Esophagus muscularis mucosa (tissue), 4 donors: ENCODE measurements at regions of chr12 and their contacts with region 1.

Region 1: GRCh38 chr12:76878899-76879709 is at the start of gene CSRP2:
- DNase-seq: peak; percentile 95
- H3K4me3 ChIP-seq: peak within 1 kb of the TSS; percentile 79 to 87 (median 82)
- H3K27ac ChIP-seq: peak within 1 kb of the TSS; percentile 92 to 96 (median 94)
- H3K4me1 ChIP-seq: peaks cover 18 to 55% (median 44%) of the 10 kb centered on the region in 4 donors
- H3K27me3 ChIP-seq: no peaks in the 10 kb centered on the region
- CTCF ChIP-seq: peak in 2 of 3 experiments; percentile 15 to 57
- EP300 ChIP-seq: peak; percentile 21
- POLR2A ChIP-seq: no peak
- total RNA-seq, gene CSRP2: 46.1 to 129 (median 74.8) TPM

Region 2: DNA sequence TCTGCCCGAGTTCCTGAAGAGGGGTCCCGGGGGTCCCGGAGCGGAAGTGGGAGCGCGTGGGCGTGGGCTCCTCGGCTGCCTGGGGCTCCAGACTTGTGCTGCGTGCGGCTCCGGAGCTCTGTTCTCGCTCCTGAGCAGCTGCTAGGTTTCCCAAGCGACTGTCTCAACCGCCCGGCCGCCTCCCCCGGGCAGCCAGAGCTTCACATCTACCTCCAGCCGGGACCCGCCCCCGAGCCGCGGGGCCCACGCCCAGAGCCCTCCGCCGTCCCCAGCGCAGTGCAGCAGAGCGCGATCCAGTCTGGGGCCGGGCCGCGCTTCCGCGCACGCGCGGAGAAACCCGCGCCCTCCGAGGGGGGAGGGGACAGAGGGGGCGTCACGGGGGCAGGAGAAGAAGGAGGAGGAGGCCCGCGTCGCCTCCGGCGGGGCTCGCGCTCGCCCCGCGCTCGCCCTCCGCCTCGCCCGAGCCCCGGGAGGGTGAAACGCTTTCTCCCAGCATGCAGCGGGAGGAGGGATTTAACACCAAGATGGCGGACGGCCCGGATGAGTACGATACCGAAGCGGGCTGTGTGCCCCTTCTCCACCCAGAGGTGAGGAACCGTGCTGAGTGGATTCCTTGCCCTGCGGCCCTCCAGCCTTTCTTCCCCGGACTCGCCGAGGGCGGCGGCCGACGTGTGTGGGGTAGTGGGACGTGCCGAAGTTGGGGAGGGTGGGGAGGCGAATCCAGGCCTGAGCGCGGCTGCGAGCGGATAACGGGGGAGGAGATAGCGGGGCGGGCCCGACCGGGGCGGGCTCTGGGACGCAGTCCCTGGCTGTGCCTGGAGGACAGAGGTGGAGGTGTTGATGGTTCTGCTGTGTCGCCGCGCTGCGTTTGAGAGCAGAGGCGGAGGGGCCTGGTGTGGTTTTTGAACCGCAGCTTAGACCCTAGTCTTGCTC is 115.1 kb before region 1 on chr12 and contains the start of gene ZDHHC17:
- intact Hi-C with region 1: loop called (anchors 5 kb)
- DNase-seq: peak; percentile 96
- H3K4me3 ChIP-seq: peak within 1 kb of the TSS; percentile 72 to 76 (median 74)
- H3K27ac ChIP-seq: peak within 1 kb of the TSS; percentile 90 to 98 (median 95)
- H3K4me1 ChIP-seq: peaks cover 40 to 50% (median 45%) of the 10 kb centered on the region in 4 donors
- H3K27me3 ChIP-seq: no peaks in the 10 kb centered on the region
- CTCF ChIP-seq: no peak
- EP300 ChIP-seq: no peak
- POLR2A ChIP-seq: peak; percentile 29
- total RNA-seq, gene ZDHHC17: 26.2 to 41.9 (median 38.0) TPM

Region 3: DNA sequence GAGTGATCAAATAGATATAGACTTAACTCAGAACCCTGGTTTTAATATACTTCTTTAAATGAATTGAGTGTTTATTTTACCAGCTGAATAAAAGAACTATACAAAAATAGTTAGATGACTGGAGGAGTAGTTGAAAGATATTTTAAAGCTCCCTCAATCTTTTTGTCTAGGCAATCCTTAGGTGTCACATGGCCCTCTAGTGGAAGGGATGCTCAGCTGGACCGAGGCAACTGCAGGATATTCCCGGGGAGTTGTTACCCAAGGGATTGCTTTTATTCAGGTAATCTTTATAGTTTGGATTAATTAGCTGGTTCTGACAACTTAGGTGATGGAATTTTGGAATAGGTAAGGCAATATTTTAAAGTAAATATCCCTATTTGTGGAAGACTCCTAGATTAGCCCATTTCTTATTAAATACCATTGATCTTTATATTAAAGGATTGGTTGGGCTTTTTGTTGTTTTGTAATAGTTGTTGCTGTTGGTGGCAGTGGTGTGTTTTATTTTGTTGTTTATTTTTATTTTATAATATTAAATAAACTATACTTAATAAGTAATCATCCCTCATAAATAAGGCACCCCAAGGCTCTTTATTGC is 58.1 kb before region 1 on chr12:
- intact Hi-C with region 1: loop called (anchors 10 kb)
- DNase-seq: no peak
- H3K4me3 ChIP-seq: no peak overlapping the region
- H3K27ac ChIP-seq: no peak overlapping the region
- H3K4me1 ChIP-seq: peaks cover 0 to 4% (median 0%) of the 10 kb centered on the region in 4 donors
- H3K27me3 ChIP-seq: no peaks in the 10 kb centered on the region
- CTCF ChIP-seq: peak; percentile 54 to 66 (median 58)
- EP300 ChIP-seq: no peak
- POLR2A ChIP-seq: no peak